ENCODE measurements at regions of chr19 and their contacts with region 1.

Region 1: DNA sequence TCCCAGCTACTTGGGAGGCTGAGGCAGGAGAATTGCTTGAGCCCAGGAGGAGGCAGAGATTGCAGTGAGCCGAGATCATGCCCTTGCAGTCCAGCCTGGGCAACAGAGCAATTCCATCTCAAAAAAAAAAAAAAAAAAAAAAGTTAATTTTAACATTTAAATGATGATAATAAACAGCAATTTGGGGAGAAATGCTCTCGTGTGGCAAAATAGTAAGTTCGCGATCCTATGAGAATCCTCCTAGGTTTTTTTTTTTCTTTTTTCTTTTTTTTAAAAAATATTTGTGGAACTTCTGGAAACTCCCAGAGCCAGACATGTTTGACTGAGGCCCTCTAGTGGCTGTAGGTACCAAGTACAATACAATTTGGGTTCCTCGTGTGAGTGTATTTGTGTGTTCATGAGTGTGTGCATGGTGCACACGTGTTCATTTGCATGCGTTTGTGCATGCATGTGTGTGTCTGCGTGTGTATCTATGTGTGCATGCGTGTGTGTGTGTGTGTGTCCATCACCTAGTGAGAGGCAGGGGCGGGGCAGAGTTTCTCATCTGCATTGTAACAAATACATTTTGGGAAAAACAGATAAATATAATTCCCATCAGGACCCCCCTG is 31.2 kb downstream of the TMPRSS9 start:
- DNase-seq: peak; percentile 49 to 82 (median 71)
- H3K4me3 ChIP-seq: no peak overlapping the region
- H3K4me3 Mint-ChIP-seq: no peak overlapping the region
- H3K27ac ChIP-seq: no peak overlapping the region
- H3K27ac Mint-ChIP-seq: no peak overlapping the region
- H3K4me1 ChIP-seq: peaks cover 18 to 27% of the 10 kb centered on the region in 2 donors
- H3K4me1 Mint-ChIP-seq: peaks cover 29% of the 10 kb centered on the region
- H3K27me3 ChIP-seq: no peaks in the 10 kb centered on the region
- H3K27me3 Mint-ChIP-seq: peaks cover 5 to 7% (median 7%) of the 10 kb centered on the region in 3 donors
- CTCF ChIP-seq: peak; percentile 86

Region 2: DNA sequence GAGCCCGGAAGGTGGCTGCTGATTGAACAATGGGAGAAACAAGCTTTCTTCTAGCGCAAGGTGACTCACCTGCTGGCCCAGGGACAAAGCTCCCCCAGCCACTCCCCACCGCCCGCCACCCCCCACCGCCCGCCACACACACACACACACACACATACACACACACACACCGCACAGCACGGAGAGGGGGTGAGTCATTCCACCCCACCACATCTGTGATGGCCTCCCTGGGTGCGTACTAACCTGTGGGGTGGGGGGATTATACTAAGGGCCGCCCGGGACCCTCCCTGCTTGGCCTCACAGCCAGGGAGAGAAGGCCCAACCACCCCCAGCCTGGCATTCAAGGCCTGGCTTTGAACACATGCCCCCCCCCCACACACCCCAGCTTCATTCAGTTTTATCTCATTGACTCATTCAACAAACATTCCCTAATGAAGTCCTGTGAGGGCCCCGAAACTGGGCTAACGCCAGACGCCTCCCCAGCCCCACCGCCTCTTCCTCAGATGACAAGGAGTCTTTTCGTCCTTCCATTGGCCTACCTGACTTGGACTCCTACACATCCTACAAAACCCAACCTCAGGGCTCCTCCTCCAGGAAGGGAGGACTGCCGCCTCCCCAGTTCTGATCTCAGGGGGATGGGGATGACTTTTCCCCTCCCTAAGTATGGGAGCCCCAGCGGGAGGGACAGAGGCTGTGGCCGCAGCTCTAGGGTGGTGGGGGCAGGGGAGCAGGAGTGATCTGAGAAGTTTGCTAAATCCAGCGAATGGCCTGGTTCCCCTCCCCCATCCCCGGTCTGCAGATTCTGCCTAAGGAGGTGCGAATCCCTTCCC is 643.7 kb before region 1 on chr19:
- intact Hi-C with region 1: no loop called
- DNase-seq: no peak
- H3K4me3 ChIP-seq: peak overlapping the region in 1 of 3 experiments; percentile 34
- H3K4me3 Mint-ChIP-seq: peak overlapping the region in 1 of 2 donors; percentile 84
- H3K27ac ChIP-seq: no peak overlapping the region
- H3K27ac Mint-ChIP-seq: peak overlapping the region in 1 of 7 donors; percentile 50
- H3K4me1 ChIP-seq: peaks cover 5 to 10% of the 10 kb centered on the region in 2 donors
- H3K4me1 Mint-ChIP-seq: peaks cover 14% of the 10 kb centered on the region
- H3K27me3 ChIP-seq: peaks cover 60 to 80% of the 10 kb centered on the region in 2 donors
- H3K27me3 Mint-ChIP-seq: peaks cover 59 to 91% (median 89%) of the 10 kb centered on the region in 3 donors
- CTCF ChIP-seq: no peak

Region 3: GRCh38 chr19:2282062-2282861 is 109.0 kb before region 1 on chr19 and contains the start of gene PEAK3:
- intact Hi-C with region 1: loop called in 1 of 2 experiments (anchors 10 kb)
- DNase-seq: peak; percentile 66 to 78 (median 73)
- H3K4me3 ChIP-seq: peak within 1 kb of the TSS; percentile 49 to 79 (median 71)
- H3K4me3 Mint-ChIP-seq: peak within 1 kb of the TSS; percentile 88 to 94
- H3K27ac ChIP-seq: peak within 1 kb of the TSS; percentile 67 to 82
- H3K27ac Mint-ChIP-seq: peak within 1 kb of the TSS; percentile 87 to 94 (median 92)
- H3K4me1 ChIP-seq: peaks cover 33 to 49% of the 10 kb centered on the region in 2 donors
- H3K4me1 Mint-ChIP-seq: peaks cover 43% of the 10 kb centered on the region
- H3K27me3 ChIP-seq: no peaks in the 10 kb centered on the region
- H3K27me3 Mint-ChIP-seq: peaks cover 4 to 9% (median 4%) of the 10 kb centered on the region in 3 donors
- CTCF ChIP-seq: no peak
- polyA plus RNA-seq, gene PEAK3: 2.4 to 6.3 (median 2.9) TPM

Region 4: GRCh38 chr19:2328401-2329148 is 62.6 kb before region 1 on chr19 and contains the starts of genes LSM7 and SPPL2B:
- intact Hi-C with region 1: loop called in 1 of 2 experiments (anchors 5 kb)
- DNase-seq: peak; percentile 82 to 90 (median 89)
- H3K4me3 ChIP-seq: peak within 1 kb of the TSS; percentile 82 to 97 (median 92)
- H3K4me3 Mint-ChIP-seq: peak within 1 kb of the TSS; percentile 100
- H3K27ac ChIP-seq: peak within 1 kb of the TSS; percentile 75 to 80
- H3K27ac Mint-ChIP-seq: peak within 1 kb of the TSS; percentile 98 to 99 (median 99)
- H3K4me1 ChIP-seq: peaks cover 34 to 50% of the 10 kb centered on the region in 2 donors
- H3K4me1 Mint-ChIP-seq: peaks cover 65% of the 10 kb centered on the region
- H3K27me3 ChIP-seq: no peaks in the 10 kb centered on the region
- H3K27me3 Mint-ChIP-seq: peaks cover 0 to 10% (median 3%) of the 10 kb centered on the region in 3 donors
- CTCF ChIP-seq: no peak
- polyA plus RNA-seq, gene LSM7: 98.6 to 312 (median 132) TPM
- polyA plus RNA-seq, gene SPPL2B: 5.7 to 64.9 (median 8.7) TPM

Measured in CD14-positive monocyte (primary cell).